K562 (cell line): ENCODE measurements at regions of chr17 and their contacts with region 1.

Region 1: DNA sequence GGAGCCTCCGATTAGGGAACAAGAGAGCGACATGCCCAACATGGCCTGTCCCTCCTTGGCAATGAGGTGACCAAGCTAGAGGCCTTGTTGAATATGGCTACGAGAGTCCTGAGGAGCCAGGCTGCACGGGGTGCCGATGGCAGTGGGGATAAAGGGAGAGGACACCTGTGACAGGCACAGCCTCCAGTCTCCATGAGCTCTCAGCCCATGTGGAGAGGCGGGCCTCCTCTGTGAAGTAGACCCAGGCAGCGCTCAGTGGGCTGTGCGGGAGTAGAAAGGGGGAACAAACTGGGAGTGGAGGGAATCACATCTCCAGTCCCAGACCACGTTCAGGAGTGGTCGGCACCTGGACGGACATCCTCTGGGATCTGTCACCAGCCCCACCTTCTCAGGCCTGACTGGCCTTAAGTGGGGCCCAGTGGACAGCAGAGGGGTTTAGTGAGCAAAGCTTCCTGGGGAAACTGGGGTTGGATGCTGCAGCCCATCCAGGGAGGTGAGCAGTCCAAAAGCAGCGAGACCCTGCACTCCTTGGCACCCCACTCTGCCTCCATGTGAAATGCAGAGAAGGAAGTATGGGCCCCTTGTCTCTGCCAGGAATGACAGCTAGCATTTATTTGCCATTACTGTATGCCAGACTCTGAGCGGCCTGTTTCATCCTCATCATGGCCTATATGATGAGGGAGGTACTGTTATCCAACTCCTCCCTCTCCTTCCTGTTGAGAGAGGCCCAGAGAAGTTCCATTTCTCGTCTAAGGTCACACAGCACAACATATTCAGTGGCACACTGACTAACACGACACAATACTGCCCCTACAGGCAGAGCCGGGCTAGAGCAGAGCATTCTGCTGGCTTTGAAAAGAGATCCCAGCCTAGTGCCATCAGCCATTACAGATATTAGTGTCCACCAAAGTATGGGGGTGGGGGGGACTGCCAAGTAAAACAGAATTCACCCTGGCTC is 4.5 kb upstream of the TMEM92 start:
- DNase-seq: peak; percentile 65 to 77 (median 69)
- ATAC-seq: peak; percentile 84
- H3K4me3 ChIP-seq: no peak overlapping the region
- H3K27ac ChIP-seq: no peak overlapping the region
- H3K4me1 ChIP-seq: peaks cover 12 to 34% of the 10 kb centered on the region in 2 experiments
- H3K27me3 ChIP-seq: peaks cover 0 to 12% of the 10 kb centered on the region in 2 experiments; a peak in 2 of 5 replicates
- CTCF ChIP-seq: peak; percentile 86 to 89 (median 88)
- EP300 ChIP-seq: no peak
- POLR2A ChIP-seq: no peak
- RAD21 ChIP-seq: peak; percentile 63 to 72

Region 2: GRCh38 chr17:50213026-50214022 is 56.4 kb before region 1 on chr17:
- CTCF ChIA-PET with region 1: no interaction called
- POLR2A ChIA-PET with region 1: interaction called, 6 read pairs
- in situ Hi-C with region 1: loop called (anchors 5 kb)
- intact Hi-C with region 1: no loop called
- DNase-seq: peak; percentile 47 to 51 (median 49)
- ATAC-seq: peak; percentile 30; the same call in 2 of the 3 replicates
- H3K4me3 ChIP-seq: no peak overlapping the region
- H3K27ac ChIP-seq: no peak overlapping the region
- H3K4me1 ChIP-seq: peaks cover 42 to 45% of the 10 kb centered on the region in 2 experiments
- H3K27me3 ChIP-seq: no peaks in the 10 kb centered on the region
- CTCF ChIP-seq: peak; percentile 30 to 32 (median 30); a peak in 3 of 6 replicates
- EP300 ChIP-seq: no peak
- POLR2A ChIP-seq: no peak
- RAD21 ChIP-seq: peak in 1 of 2 experiments; percentile 13; a peak in 1 of 4 replicates

Region 3: GRCh38 chr17:50297407-50297865 is 27.7 kb after region 1 on chr17:
- CTCF ChIA-PET with region 1: interaction called, 14 read pairs
- POLR2A ChIA-PET with region 1: interaction called, 3 read pairs
- in situ Hi-C with region 1: no loop called
- intact Hi-C with region 1: no loop called
- DNase-seq: peak; percentile 80 to 86 (median 84)
- ATAC-seq: peak; percentile 99
- H3K4me3 ChIP-seq: no peak overlapping the region
- H3K27ac ChIP-seq: no peak overlapping the region
- H3K4me1 ChIP-seq: no peaks in the 10 kb centered on the region; a peak in 1 of 5 replicates
- H3K27me3 ChIP-seq: peaks cover 5 to 30% of the 10 kb centered on the region in 2 experiments; a peak in 4 of 5 replicates
- CTCF ChIP-seq: peak; percentile 94 to 96 (median 95)
- EP300 ChIP-seq: no peak
- POLR2A ChIP-seq: no peak
- RAD21 ChIP-seq: peak; percentile 99

Region 4: DNA sequence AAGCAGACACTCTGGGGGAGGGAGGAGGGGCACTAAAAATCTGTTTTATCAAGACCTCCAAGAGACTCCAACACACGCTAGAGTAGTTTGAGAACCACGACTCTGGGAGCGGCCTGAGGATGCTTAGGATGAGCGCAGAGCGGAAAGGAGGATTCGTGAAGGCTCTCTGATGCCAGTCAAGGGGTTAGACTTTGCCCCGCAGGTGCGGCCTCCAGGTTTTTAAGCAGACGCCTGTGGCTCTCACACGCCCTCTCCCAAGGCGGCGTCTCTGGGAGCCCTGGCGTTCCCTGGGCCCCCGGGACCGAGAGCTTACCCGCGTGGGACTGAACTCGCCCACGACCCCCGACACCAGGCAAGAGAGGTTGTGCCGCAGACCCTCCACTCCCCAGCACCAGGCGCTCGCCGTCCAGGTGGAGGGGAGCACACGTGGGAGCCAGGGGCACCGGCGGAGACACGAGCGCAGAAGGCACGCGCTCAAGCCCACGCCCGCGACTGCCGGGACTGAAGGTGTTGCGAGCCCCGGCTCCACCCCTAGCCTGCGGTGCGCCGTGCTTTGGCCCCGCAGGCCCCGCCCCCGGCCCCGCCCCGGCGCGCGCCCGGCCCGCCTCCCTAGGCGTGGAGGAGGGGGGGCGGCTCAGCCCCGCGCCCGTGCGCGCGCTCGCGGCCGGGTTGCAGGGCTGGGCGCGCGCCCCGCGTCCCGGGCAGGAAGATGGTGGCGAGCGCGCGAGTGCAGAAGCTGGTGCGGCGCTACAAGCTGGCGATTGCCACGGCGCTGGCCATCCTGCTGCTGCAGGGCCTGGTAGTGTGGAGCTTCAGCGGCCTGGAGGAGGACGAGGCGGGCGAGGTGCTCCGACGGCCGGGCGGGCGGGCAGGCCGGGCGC is 75.9 kb after region 1 on chr17 and contains the start of gene XYLT2:
- CTCF ChIA-PET with region 1: no interaction called
- POLR2A ChIA-PET with region 1: no interaction called
- in situ Hi-C with region 1: no loop called
- intact Hi-C with region 1: no loop called
- DNase-seq: peak; percentile 91 to 97 (median 97)
- ATAC-seq: peak; percentile 94
- H3K4me3 ChIP-seq: peak within 1 kb of the TSS; percentile 81
- H3K27ac ChIP-seq: peak within 1 kb of the TSS; percentile 66
- H3K4me1 ChIP-seq: peaks cover 8 to 29% of the 10 kb centered on the region in 2 experiments; a peak in 4 of 5 replicates
- H3K27me3 ChIP-seq: no peaks in the 10 kb centered on the region
- CTCF ChIP-seq: no peak
- EP300 ChIP-seq: no peak
- POLR2A ChIP-seq: peak; percentile 75
- RAD21 ChIP-seq: no peak
- polyA plus RNA-seq, gene XYLT2: 0.63 to 1.0 TPM